Breast epithelium (tissue), 4 donors: ENCODE measurements at regions of chr4 and their contacts with region 1.

Region 1: DNA sequence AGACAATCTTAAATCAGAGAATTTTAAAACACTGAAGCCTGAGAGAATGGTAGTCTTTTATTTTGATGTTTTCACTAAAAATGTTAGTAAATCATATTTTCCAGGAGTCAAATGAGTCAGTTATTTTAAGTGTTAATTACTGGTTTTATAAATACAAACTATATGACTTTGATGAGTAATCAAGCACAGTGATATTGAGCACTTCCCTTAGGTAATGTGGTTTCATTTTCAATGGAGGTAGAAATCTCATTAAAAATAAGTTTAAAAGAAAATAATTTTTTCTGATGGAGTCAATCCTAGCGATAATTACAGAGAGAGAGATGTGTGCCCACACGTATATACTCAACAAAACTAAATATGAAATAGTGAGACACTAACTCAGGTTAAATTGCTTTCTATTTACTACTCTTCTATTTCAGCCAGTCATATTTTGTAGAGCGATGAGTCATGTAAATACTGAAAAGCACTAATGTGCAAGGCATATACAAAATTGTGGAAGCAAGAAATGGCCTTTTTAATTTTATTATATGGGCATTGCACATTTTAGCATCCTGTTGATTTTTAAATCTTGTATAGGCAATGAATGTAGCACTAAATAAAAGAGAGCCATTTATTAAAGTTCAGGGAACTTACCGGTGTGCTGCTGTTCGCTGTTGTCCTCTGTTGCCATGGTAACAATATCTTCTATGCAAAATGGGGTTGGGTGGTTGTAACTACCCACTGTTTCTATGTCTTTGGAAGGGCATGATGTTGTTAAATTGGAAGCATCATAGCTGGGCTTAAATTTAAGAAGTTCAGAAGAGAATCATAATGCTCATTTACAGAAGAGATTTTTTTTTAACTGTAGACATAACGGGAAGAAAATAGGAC is 513.7 kb downstream of the TLL1 start:
- DNase-seq: no peak
- H3K4me3 ChIP-seq: no peak overlapping the region
- H3K27ac ChIP-seq: no peak overlapping the region
- H3K4me1 ChIP-seq: no peaks in the 10 kb centered on the region
- H3K27me3 ChIP-seq: no peaks in the 10 kb centered on the region
- CTCF ChIP-seq: no peak
- POLR2A ChIP-seq: no peak

Region 2: DNA sequence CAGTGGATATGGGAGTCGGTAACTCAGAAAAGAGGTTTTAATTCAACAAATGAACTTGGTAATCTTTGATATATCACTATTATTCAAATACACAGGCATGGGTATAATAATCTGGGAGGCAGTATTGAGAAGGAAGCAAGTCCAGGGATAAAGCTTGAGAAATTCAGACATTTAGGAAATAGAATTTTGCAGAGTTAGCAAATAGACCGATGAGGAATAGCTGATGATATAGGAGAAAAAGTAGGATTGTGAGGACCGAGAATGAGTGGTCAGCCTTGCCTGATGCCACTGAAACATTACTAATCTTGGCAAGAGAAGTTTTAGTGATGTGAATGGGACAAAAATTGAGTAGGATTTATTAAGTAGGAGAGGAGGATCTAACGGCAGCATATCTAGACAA is 441.8 kb before region 1 on chr4:
- intact Hi-C with region 1: loop called (anchors 5 kb)
- DNase-seq: no peak
- H3K4me3 ChIP-seq: no peak overlapping the region
- H3K27ac ChIP-seq: no peak overlapping the region
- H3K4me1 ChIP-seq: no peaks in the 10 kb centered on the region
- H3K27me3 ChIP-seq: no peaks in the 10 kb centered on the region
- CTCF ChIP-seq: no peak
- POLR2A ChIP-seq: no peak

Region 3: DNA sequence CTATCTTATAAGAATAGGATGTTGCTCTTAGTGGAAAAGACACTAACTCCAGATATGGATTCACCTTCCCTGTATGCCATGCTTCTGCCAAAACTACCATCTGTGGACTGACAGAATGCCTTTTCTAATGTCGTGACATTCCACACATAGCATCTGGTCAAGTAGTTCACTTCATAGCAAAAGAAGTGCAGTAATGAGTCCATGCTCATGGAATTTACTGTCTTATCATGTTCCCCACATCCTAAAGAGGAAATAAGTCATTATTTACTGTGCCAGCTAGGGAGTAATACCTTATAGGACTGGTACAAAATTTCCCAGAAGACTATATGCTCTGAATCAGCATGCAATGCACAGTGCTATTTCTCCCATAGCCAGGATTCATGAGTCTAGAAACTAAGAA is 48.7 kb after region 1 on chr4:
- intact Hi-C with region 1: no loop called
- DNase-seq: no peak
- H3K4me3 ChIP-seq: no peak overlapping the region
- H3K27ac ChIP-seq: no peak overlapping the region
- H3K4me1 ChIP-seq: no peaks in the 10 kb centered on the region
- H3K27me3 ChIP-seq: no peaks in the 10 kb centered on the region
- CTCF ChIP-seq: no peak
- POLR2A ChIP-seq: no peak